Left ventricle myocardium inferior (tissue), 1 donor: ENCODE measurements at regions of chr9 and their contacts with region 1.

Region 1: GRCh38 chr9:25461416-25461815 is 216.8 kb downstream of the TUSC1 start:
- DNase-seq: no peak
- H3K4me3 ChIP-seq: no peak overlapping the region
- H3K27ac ChIP-seq: no peak overlapping the region
- H3K4me1 ChIP-seq: no peaks in the 10 kb centered on the region
- H3K27me3 ChIP-seq: no peaks in the 10 kb centered on the region
- CTCF ChIP-seq: no peak

Region 2: GRCh38 chr9:24961762-24962161 is 499.7 kb before region 1 on chr9:
- intact Hi-C with region 1: no loop called
- DNase-seq: no peak
- H3K4me3 ChIP-seq: no peak overlapping the region
- H3K27ac ChIP-seq: no peak overlapping the region
- H3K4me1 ChIP-seq: no peaks in the 10 kb centered on the region
- H3K27me3 ChIP-seq: no peaks in the 10 kb centered on the region
- CTCF ChIP-seq: no peak

Region 3: GRCh38 chr9:25350011-25350410 is 111.4 kb before region 1 on chr9:
- intact Hi-C with region 1: no loop called
- DNase-seq: no peak
- H3K4me3 ChIP-seq: no peak overlapping the region
- H3K27ac ChIP-seq: no peak overlapping the region
- H3K4me1 ChIP-seq: no peaks in the 10 kb centered on the region
- H3K27me3 ChIP-seq: no peaks in the 10 kb centered on the region
- CTCF ChIP-seq: no peak

Region 4: GRCh38 chr9:25570802-25571201 is 109.4 kb after region 1 on chr9:
- intact Hi-C with region 1: loop called (anchors 10 kb)
- DNase-seq: no peak
- H3K4me3 ChIP-seq: no peak overlapping the region
- H3K27ac ChIP-seq: no peak overlapping the region
- H3K4me1 ChIP-seq: no peaks in the 10 kb centered on the region
- H3K27me3 ChIP-seq: no peaks in the 10 kb centered on the region
- CTCF ChIP-seq: no peak

Region 5: DNA sequence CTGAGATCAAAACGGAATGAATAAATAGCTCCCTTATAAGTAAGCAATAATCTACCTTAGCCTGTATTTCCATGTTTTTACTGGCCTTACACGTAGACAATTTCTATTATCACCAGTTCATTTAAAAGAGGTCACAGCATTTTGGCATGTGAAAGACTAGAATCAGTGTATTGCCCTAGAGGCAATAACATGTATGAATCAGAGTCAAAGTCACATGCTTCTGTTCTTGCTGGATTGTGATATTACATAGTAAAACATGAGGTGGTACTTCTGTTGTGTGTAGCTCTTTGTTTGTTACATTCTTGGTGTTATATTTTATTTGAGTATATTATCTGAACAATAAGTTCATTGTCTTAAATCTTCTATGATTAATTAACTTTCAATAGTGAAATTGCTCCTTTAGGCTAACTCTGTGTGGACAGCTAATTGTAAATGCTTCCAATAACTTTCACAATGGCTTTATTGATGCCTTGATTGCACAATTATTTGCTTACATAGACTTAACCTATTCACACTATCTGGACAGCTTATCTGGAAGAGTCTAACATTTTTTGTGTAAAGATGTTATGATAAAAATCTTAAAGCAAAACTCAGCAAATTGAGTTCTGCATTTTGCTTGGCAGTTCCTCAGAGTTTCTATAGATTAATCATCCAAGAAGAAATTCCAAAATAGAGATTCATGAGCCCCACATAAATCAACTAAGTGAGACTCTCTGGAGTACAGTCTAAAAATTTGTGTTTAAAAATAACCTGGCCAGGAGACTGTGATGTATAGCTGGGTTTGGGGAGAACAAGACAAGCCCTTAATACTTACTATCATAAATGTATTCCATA is 456.4 kb after region 1 on chr9:
- intact Hi-C with region 1: no loop called
- DNase-seq: no peak
- H3K4me3 ChIP-seq: no peak overlapping the region
- H3K27ac ChIP-seq: no peak overlapping the region
- H3K4me1 ChIP-seq: no peaks in the 10 kb centered on the region
- H3K27me3 ChIP-seq: no peaks in the 10 kb centered on the region
- CTCF ChIP-seq: no peak